Mammary epithelial cell (primary cell): ENCODE measurements at regions of chr2 and their contacts with region 1.

Region 1: DNA sequence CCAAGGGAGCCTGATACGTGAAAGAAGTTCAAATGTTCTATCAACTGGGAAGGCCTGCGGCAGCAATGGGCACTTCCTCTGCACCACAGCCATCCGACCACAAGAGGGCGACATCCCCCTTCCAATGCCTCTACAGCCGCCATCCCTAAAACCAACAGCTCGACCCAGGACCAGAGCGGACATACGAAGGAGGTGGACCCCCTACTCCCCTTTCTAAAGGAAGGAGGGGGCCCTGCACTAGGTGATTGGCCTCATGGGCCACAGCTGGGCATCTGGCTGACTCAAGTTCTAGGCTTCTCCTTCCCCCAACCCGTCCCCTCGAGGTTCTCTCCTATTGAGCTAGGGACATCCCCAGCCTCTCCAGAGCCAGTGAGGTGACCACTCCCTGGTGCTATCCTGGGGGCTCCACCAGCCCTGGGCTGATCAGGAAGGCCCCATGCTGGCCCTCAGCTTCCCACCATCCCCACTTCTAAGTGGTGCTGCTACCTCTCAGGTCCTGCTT is 217.2 kb downstream of the TNS1 start:
- DNase-seq: peak; percentile 37
- H3K4me3 ChIP-seq: no peak overlapping the region
- H3K27ac ChIP-seq: no peak overlapping the region
- H3K4me1 ChIP-seq: peaks cover 4% of the 10 kb centered on the region
- H3K27me3 ChIP-seq: no peaks in the 10 kb centered on the region
- CTCF ChIP-seq: peak; percentile 92 to 97

Region 2: GRCh38 chr2:217880287-217880889 is 94.8 kb after region 1 on chr2:
- CTCF ChIA-PET with region 1: no interaction called
- dilution Hi-C with region 1: no loop called
- in situ Hi-C with region 1: loop called (anchors 5 kb)
- intact Hi-C with region 1: no loop called
- DNase-seq: no peak
- H3K4me3 ChIP-seq: no peak overlapping the region
- H3K27ac ChIP-seq: no peak overlapping the region
- H3K4me1 ChIP-seq: no peaks in the 10 kb centered on the region
- H3K27me3 ChIP-seq: no peaks in the 10 kb centered on the region
- CTCF ChIP-seq: no peak

Region 3: DNA sequence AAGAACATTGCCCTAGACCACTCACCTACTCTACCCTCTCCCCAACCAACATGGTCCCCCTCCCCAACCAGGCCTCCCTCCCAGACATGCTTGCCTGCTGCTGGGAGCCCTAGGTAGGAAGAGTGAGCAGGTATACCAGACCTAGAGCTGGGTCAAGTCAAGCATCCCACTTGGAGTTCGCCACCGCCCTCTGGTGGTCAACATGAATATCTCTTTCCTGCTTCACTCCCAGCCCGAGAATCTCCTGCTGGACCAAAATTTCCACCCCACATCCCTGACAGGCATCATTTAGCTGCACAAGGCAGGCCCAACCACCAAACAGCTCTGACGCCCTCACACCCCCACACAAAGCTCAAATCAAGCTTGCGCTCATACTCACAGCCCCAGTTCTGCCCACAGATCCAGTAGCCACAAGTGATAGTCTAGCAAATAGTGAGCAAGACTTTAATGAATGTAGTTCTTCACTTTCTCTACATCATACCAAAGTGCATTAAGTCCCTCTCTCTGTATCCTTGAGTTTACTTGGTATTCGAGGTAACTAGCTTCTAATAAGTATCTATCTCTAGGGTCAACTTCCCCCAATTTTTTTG is 101.2 kb after region 1 on chr2:
- CTCF ChIA-PET with region 1: interaction called, 11 read pairs
- dilution Hi-C with region 1: loop called (anchors 5 kb)
- in situ Hi-C with region 1: loop called (anchors 5 kb)
- intact Hi-C with region 1: loop called (anchors 1 kb)
- DNase-seq: peak; percentile 52
- H3K4me3 ChIP-seq: no peak overlapping the region
- H3K27ac ChIP-seq: no peak overlapping the region
- H3K4me1 ChIP-seq: no peaks in the 10 kb centered on the region
- H3K27me3 ChIP-seq: no peaks in the 10 kb centered on the region
- CTCF ChIP-seq: peak; percentile 79 to 83

Region 4: DNA sequence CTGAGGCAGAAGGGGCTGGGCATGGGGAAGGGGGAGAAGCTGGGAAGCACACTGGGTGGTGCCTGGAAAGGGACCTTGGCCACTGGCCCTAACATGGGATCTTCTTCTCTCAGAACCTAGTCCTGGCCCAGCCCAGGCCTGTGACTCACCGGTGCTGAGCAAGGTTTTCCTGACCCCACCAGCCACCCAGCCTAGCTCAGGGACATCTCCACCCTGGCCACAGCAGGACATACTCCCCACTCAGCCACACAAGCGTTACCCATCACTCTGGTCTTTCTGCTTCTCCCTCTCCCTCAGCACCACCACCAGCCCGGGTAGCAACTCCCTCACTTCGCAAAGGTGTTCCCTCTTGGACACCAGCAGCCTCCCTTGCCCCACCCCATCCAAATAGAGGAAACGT is 194.4 kb after region 1 on chr2:
- CTCF ChIA-PET with region 1: no interaction called
- dilution Hi-C with region 1: loop called (anchors 5 kb)
- in situ Hi-C with region 1: loop called (anchors 5 to 10 kb)
- intact Hi-C with region 1: no loop called
- DNase-seq: no peak
- H3K4me3 ChIP-seq: no peak overlapping the region
- H3K27ac ChIP-seq: no peak overlapping the region
- H3K4me1 ChIP-seq: peaks cover 3% of the 10 kb centered on the region
- H3K27me3 ChIP-seq: peaks cover 10% of the 10 kb centered on the region
- CTCF ChIP-seq: no peak

Region 5: DNA sequence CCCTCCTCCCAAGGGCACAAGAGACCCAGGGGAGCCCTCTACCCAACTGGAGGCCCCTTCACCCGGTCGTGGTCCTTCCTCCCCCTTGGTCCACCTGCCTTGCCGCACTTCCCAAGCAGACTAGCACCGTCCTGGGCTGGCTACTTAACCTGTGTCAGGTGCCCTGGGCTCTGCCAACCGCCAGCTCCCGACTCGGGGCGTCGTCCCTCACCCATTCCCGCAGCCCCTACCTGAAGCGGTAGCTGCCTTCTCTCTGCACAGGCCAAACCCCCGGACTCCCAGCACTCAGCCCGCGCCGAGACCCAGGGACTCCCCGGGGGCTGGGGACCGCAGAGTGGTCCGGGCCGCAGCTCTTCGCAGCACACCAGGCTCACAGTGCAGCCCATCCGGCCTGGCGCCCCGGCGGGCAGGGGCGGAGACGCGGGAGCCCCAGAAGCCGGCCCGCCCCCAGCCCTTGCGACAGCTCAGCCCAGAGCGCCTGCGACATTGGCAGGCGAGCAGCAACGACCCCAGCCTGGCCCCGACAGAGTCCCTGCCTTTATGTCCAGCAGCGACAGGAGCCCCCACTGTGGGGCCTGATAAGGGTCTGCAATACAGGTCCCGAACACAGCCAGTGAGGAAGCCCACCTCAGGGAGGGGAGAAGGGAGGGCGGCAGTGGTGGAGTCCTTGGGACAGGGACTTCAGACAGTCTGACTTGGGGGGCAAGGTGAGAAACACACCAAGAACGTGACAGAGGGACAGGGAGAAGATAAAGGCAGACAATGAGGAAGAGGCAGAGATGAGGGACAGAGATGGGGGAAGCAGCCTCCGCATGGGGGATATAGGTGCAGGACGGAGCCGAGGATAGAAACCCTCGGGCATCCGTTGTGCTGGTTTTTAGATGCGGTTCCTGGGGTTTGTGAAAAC is 248.2 kb after region 1 on chr2:
- CTCF ChIA-PET with region 1: interaction called, 8 read pairs
- dilution Hi-C with region 1: no loop called
- in situ Hi-C with region 1: no loop called
- intact Hi-C with region 1: loop called (anchors 1 kb)
- DNase-seq: no peak
- H3K4me3 ChIP-seq: no peak overlapping the region
- H3K27ac ChIP-seq: no peak overlapping the region
- H3K4me1 ChIP-seq: peaks cover 17% of the 10 kb centered on the region
- H3K27me3 ChIP-seq: no peaks in the 10 kb centered on the region
- CTCF ChIP-seq: no peak

Region 6: GRCh38 chr2:218063486-218063885 is 277.9 kb after region 1 on chr2:
- CTCF ChIA-PET with region 1: interaction called, 8 read pairs
- dilution Hi-C with region 1: no loop called
- in situ Hi-C with region 1: no loop called
- intact Hi-C with region 1: loop called (anchors 1 kb)
- DNase-seq: no peak
- H3K4me3 ChIP-seq: no peak overlapping the region
- H3K27ac ChIP-seq: no peak overlapping the region
- H3K4me1 ChIP-seq: no peaks in the 10 kb centered on the region
- H3K27me3 ChIP-seq: peaks cover 2% of the 10 kb centered on the region
- CTCF ChIP-seq: no peak

Region 7: DNA sequence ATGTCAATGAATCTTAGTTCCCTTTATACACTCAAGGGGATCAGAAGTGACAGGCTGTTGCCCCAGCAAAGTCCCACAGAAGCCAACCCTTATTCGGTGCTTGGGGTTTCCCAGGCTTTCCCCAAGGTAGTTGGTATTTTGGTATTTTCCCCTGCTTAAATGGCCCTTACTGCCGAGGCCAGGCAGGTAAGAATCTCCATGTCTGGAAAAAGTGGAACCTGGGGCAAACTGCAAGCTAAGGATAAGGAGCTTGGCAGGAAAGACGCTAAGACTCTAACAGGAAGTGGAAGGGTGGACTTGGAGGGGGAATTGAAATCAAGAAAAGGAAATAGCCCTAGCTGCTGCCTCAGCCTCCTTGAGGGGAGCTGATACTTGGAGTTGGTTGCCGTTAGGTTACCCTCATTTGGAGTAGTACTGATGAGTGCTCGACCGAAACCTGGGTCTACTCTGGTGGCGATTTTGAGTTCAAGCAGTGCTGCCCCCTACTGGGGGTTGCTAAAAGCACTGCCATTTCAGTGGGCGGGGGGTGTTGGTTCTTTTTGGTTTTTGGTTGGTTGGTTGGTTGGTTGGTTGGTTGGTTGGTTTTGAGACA is 471.9 kb after region 1 on chr2:
- CTCF ChIA-PET with region 1: no interaction called
- dilution Hi-C with region 1: no loop called
- in situ Hi-C with region 1: no loop called
- intact Hi-C with region 1: loop called (anchors 5 kb)
- DNase-seq: no peak
- H3K4me3 ChIP-seq: no peak overlapping the region
- H3K27ac ChIP-seq: no peak overlapping the region
- H3K4me1 ChIP-seq: no peaks in the 10 kb centered on the region
- H3K27me3 ChIP-seq: no peaks in the 10 kb centered on the region
- CTCF ChIP-seq: peak; percentile 53 to 63